ENCODE measurements at regions of chr10 and their contacts with region 1.

Region 1: GRCh38 chr10:69451209-69451783 is at the start of gene TSPAN15:
- DNase-seq: peak; percentile 61 to 81 (median 75)
- ATAC-seq: peak; percentile 94
- H3K4me3 ChIP-seq: peak within 1 kb of the TSS; percentile 67
- H3K4me3 Mint-ChIP-seq: peak within 1 kb of the TSS; percentile 80 to 92 (median 87)
- H3K27ac ChIP-seq: peak within 1 kb of the TSS; percentile 49
- H3K27ac Mint-ChIP-seq: peak within 1 kb of the TSS in 5 of 9 donors; percentile 5 to 82 (median 62)
- H3K4me1 ChIP-seq: peaks cover 0 to 6% of the 10 kb centered on the region in 2 donors
- H3K4me1 Mint-ChIP-seq: peaks cover 13 to 28% (median 22%) of the 10 kb centered on the region in 7 donors
- H3K27me3 ChIP-seq: no peaks in the 10 kb centered on the region
- H3K27me3 Mint-ChIP-seq: peaks cover 0 to 15% (median 5%) of the 10 kb centered on the region in 5 donors
- total RNA-seq, gene TSPAN15: 1.2 to 7.2 (median 1.9) TPM

Region 2: DNA sequence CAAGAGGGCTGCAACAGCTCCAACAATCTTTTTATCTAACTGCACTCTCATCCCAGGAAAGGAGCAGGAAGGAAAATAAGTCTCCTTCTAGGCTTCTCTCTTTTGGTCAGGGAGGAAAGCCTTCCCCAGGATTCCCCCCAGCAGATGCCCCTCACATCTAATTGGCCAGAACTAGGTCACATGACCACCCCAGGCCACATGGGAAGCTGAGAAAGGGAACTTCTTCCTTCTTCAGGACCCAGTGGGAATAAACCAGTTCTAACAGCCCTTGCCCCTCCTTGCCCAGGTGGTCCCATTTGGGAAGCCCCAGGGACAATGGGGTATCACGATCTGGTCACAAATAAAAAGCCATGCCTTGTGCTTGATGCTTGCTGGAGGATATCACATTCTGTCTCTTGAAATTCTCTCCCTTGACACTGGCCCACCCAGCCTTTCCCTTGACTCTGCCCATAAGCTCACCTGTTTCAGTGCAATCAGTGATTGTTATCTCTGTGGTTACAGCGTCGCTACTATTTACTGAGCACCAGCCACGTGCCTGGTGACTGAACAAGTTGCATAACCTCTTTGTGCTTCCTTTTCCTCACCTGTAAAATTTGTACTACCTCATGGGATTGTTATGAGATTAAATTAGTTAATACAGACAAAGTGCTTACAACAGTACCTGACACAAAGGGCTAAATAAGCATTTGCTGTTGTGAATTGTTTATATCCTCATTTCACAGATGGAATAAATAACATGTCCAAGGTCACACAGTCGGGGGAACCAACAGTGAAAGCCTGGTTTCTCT is 25.6 kb before region 1 on chr10:
- CTCF ChIA-PET with region 1: interaction called, 3 read pairs
- POLR2A ChIA-PET with region 1: no interaction called
- intact Hi-C with region 1: loop called in 1 of 2 experiments (anchors 1 kb)
- DNase-seq: peak in 7 of 9 donors; percentile 60 to 82 (median 74)
- ATAC-seq: peak; percentile 90
- H3K4me3 ChIP-seq: peak overlapping the region; percentile 22
- H3K4me3 Mint-ChIP-seq: peak overlapping the region; percentile 4 to 64 (median 36)
- H3K27ac ChIP-seq: peak overlapping the region; percentile 54
- H3K27ac Mint-ChIP-seq: peak overlapping the region; percentile 45 to 92 (median 88)
- H3K4me1 ChIP-seq: peaks cover 29 to 46% of the 10 kb centered on the region in 2 donors
- H3K4me1 Mint-ChIP-seq: peaks cover 40 to 66% (median 55%) of the 10 kb centered on the region in 7 donors
- H3K27me3 ChIP-seq: no peaks in the 10 kb centered on the region
- H3K27me3 Mint-ChIP-seq: peaks cover 0 to 7% (median 0%) of the 10 kb centered on the region in 5 donors

Measured in naive thymus-derived CD4-positive, alpha-beta T cell (primary cell).